T-cell (primary cell): ENCODE measurements at regions of chr16 and their contacts with region 1.

Region 1: GRCh38 chr16:4046221-4046620 is 70.0 kb downstream of the ADCY9 start:
- DNase-seq: no peak
- ATAC-seq: no peak
- H3K4me3 ChIP-seq: no peak overlapping the region
- H3K4me3 Mint-ChIP-seq: no peak overlapping the region
- H3K27ac ChIP-seq: no peak overlapping the region
- H3K27ac Mint-ChIP-seq: no peak overlapping the region
- H3K4me1 ChIP-seq: no peaks in the 10 kb centered on the region
- H3K4me1 Mint-ChIP-seq: peaks cover 5 to 8% (median 6%) of the 10 kb centered on the region in 3 donors
- H3K27me3 ChIP-seq: peaks cover 0 to 3% of the 10 kb centered on the region in 2 experiments
- H3K27me3 Mint-ChIP-seq: peaks cover 0 to 3% of the 10 kb centered on the region in 2 donors

Region 2: GRCh38 chr16:3640632-3641501 is 405.4 kb before region 1 on chr16:
- CTCF ChIA-PET with region 1: interaction called in 1 of 2 experiments, 11 read pairs
- POLR2A ChIA-PET with region 1: no interaction called
- DNase-seq: no peak
- ATAC-seq: no peak
- H3K4me3 ChIP-seq: no peak overlapping the region
- H3K4me3 Mint-ChIP-seq: no peak overlapping the region
- H3K27ac ChIP-seq: no peak overlapping the region
- H3K27ac Mint-ChIP-seq: no peak overlapping the region
- H3K4me1 ChIP-seq: peaks cover 8 to 16% of the 10 kb centered on the region in 2 experiments
- H3K4me1 Mint-ChIP-seq: peaks cover 25 to 39% (median 31%) of the 10 kb centered on the region in 3 donors
- H3K27me3 ChIP-seq: no peaks in the 10 kb centered on the region
- H3K27me3 Mint-ChIP-seq: no peaks in the 10 kb centered on the region

Region 3: GRCh38 chr16:3771502-3771901 is 274.7 kb before region 1 on chr16:
- CTCF ChIA-PET with region 1: no interaction called
- POLR2A ChIA-PET with region 1: no interaction called
- DNase-seq: no peak
- ATAC-seq: no peak
- H3K4me3 ChIP-seq: no peak overlapping the region
- H3K4me3 Mint-ChIP-seq: no peak overlapping the region
- H3K27ac ChIP-seq: no peak overlapping the region
- H3K27ac Mint-ChIP-seq: no peak overlapping the region
- H3K4me1 ChIP-seq: no peaks in the 10 kb centered on the region
- H3K4me1 Mint-ChIP-seq: peaks cover 0 to 7% (median 0%) of the 10 kb centered on the region in 3 donors
- H3K27me3 ChIP-seq: no peaks in the 10 kb centered on the region
- H3K27me3 Mint-ChIP-seq: no peaks in the 10 kb centered on the region

Region 4: GRCh38 chr16:3938848-3939624 is 107.2 kb before region 1 on chr16:
- CTCF ChIA-PET with region 1: no interaction called
- POLR2A ChIA-PET with region 1: no interaction called
- DNase-seq: peak; percentile 29 to 81 (median 54)
- ATAC-seq: peak; percentile 83 to 94 (median 86)
- H3K4me3 ChIP-seq: peak overlapping the region; percentile 34 to 45
- H3K4me3 Mint-ChIP-seq: peak overlapping the region in 1 of 3 donors; percentile 49
- H3K27ac ChIP-seq: no peak overlapping the region
- H3K27ac Mint-ChIP-seq: no peak overlapping the region
- H3K4me1 ChIP-seq: peaks cover 0 to 11% of the 10 kb centered on the region in 2 experiments
- H3K4me1 Mint-ChIP-seq: peaks cover 0 to 4% (median 4%) of the 10 kb centered on the region in 3 donors
- H3K27me3 ChIP-seq: peaks cover 0 to 13% of the 10 kb centered on the region in 2 experiments
- H3K27me3 Mint-ChIP-seq: no peaks in the 10 kb centered on the region

Region 5: DNA sequence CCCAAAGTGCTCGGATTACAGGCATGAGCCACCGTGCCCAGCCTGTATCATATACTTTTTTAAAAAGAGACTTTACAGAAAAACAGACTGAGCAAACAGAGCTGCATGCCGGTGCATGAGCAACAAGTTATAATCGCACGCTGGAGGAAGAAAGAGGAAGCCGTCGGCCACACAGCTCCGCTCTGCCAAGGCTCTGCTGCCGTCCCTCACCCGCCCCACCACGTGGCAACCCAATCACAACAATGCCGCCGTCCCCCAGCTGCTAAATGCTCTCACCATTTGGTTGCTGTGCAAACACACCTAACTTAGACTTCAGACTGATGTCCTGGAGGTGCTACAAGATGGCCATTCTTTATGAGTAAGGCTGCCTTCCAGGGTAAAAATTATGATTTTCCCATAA is 13.5 kb before region 1 on chr16:
- CTCF ChIA-PET with region 1: no interaction called
- POLR2A ChIA-PET with region 1: no interaction called
- DNase-seq: peak in 31 of 35 experiments; percentile 2 to 61 (median 20)
- ATAC-seq: peak in 3 of 4 experiments; percentile 64 to 71 (median 66)
- H3K4me3 ChIP-seq: no peak overlapping the region
- H3K4me3 Mint-ChIP-seq: no peak overlapping the region
- H3K27ac ChIP-seq: no peak overlapping the region
- H3K27ac Mint-ChIP-seq: no peak overlapping the region
- H3K4me1 ChIP-seq: peaks cover 0 to 5% of the 10 kb centered on the region in 2 experiments
- H3K4me1 Mint-ChIP-seq: peaks cover 20 to 26% (median 21%) of the 10 kb centered on the region in 3 donors
- H3K27me3 ChIP-seq: no peaks in the 10 kb centered on the region
- H3K27me3 Mint-ChIP-seq: no peaks in the 10 kb centered on the region